Activated CD4-positive, alpha-beta memory T cell treated with anti-CD3 and anti-CD28 coated beads for 36 hours (primary cell): ENCODE measurements at regions of chr13 and their contacts with region 1.

Region 1: DNA sequence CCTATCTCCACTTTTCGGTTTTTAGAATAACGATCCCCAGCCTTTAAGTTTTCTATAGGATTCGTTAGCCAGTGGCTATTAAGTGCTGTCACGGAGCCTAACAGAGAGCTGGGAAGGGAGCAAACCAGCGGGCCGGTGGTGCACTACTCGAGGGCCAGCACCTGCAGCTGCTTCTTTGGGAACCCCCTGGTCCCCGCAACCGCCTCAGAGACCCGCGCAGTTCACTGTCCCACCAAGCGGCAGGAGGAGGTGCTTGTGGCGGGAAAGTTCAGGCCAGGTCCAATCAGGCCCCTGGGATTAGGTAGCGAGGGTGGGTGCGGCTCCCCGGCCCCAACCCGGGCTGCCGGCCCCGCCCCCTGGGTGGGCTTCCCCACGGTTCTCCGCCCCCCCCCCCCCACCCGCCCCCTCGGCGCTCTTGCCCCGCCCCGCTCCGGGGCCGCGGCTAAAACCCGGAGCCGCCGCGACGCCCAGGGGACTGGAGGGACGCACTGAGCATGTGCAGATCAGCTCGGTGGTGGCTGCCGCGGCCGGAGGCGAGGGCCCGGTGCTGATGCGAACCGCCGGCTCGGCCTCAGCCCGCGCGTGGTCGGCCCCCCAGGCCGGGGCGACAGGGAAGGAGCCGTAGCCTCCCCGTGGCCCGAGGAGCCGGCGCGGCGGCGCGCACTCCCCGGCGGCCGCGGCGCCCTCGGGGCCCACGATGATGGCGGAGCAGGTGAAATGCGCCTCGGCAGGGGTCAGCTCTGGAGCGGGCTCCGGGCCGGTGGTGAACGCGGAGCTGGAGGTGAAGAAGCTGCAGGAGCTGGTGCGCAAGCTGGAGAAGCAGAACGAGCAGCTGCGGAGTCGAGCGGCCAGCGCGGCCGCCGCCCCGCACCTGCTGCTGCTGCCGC is at the start of gene SLAIN1:
- DNase-seq: peak; percentile 85
- H3K4me3 Mint-ChIP-seq: peak within 1 kb of the TSS; percentile 92
- H3K27ac Mint-ChIP-seq: peak within 1 kb of the TSS; percentile 49
- H3K4me1 Mint-ChIP-seq: peaks cover 32% of the 10 kb centered on the region
- H3K27me3 Mint-ChIP-seq: no peaks in the 10 kb centered on the region
- total RNA-seq, gene SLAIN1: 21.8 to 25.8 TPM

Region 2: GRCh38 chr13:76991796-76992547 is 705.5 kb before region 1 on chr13 and contains the start of gene CLN5:
- CTCF ChIA-PET with region 1: no interaction called
- POLR2A ChIA-PET with region 1: no interaction called
- intact Hi-C with region 1: loop called (anchors 10 kb)
- DNase-seq: peak; percentile 97
- H3K4me3 Mint-ChIP-seq: peak within 1 kb of the TSS; percentile 94
- H3K27ac Mint-ChIP-seq: peak within 1 kb of the TSS; percentile 99
- H3K4me1 Mint-ChIP-seq: peaks cover 41% of the 10 kb centered on the region
- H3K27me3 Mint-ChIP-seq: peaks cover 1% of the 10 kb centered on the region
- total RNA-seq, gene CLN5: 12.4 to 14.0 TPM

Region 3: DNA sequence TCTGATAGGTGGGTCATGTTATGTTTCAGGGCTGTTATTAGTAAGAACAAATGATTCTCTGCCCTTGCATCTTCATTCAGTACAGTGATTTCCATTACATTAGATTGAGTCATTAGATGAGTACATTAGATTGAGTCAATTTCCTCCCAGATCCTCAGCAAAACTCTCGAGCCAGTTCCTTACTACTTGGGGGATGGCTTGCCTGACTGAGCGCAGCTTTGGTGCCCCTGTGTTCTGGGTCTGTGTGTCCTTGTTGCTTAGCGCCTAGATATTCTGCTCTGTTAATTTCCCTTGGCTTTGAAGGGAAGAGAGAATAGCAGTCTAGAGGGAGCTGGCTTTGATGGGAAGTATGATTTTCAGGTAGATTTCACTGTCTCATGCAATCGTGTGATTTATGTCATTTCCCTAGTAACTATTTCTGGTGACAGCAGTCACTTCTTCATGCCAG is 181.1 kb before region 1 on chr13:
- CTCF ChIA-PET with region 1: no interaction called
- POLR2A ChIA-PET with region 1: no interaction called
- intact Hi-C with region 1: loop called (anchors 5 kb)
- DNase-seq: peak; percentile 31
- H3K4me3 Mint-ChIP-seq: no peak overlapping the region
- H3K27ac Mint-ChIP-seq: peak overlapping the region; percentile 16
- H3K4me1 Mint-ChIP-seq: peaks cover 8% of the 10 kb centered on the region
- H3K27me3 Mint-ChIP-seq: peaks cover 2% of the 10 kb centered on the region

Region 4: GRCh38 chr13:77729502-77730221 is 32.2 kb after region 1 on chr13:
- CTCF ChIA-PET with region 1: interaction called, 4 read pairs
- POLR2A ChIA-PET with region 1: no interaction called
- intact Hi-C with region 1: loop called (anchors 1 kb)
- DNase-seq: peak; percentile 66
- H3K4me3 Mint-ChIP-seq: peak overlapping the region; percentile 32
- H3K27ac Mint-ChIP-seq: peak overlapping the region; percentile 70
- H3K4me1 Mint-ChIP-seq: peaks cover 39% of the 10 kb centered on the region
- H3K27me3 Mint-ChIP-seq: no peaks in the 10 kb centered on the region

Region 5: GRCh38 chr13:77751513-77752456 is 54.3 kb after region 1 on chr13:
- CTCF ChIA-PET with region 1: interaction called, 5 read pairs
- POLR2A ChIA-PET with region 1: no interaction called
- intact Hi-C with region 1: loop called (anchors 1 kb)
- DNase-seq: peak; percentile 46
- H3K4me3 Mint-ChIP-seq: no peak overlapping the region
- H3K27ac Mint-ChIP-seq: no peak overlapping the region
- H3K4me1 Mint-ChIP-seq: peaks cover 13% of the 10 kb centered on the region
- H3K27me3 Mint-ChIP-seq: no peaks in the 10 kb centered on the region

Region 6: GRCh38 chr13:78228211-78228610 is 530.8 kb after region 1 on chr13:
- CTCF ChIA-PET with region 1: no interaction called
- POLR2A ChIA-PET with region 1: no interaction called
- intact Hi-C with region 1: no loop called
- DNase-seq: no peak
- H3K4me3 Mint-ChIP-seq: no peak overlapping the region
- H3K27ac Mint-ChIP-seq: no peak overlapping the region
- H3K4me1 Mint-ChIP-seq: no peaks in the 10 kb centered on the region
- H3K27me3 Mint-ChIP-seq: no peaks in the 10 kb centered on the region